Activated CD4-positive, alpha-beta T cell treated with anti-CD3 and anti-CD28 coated beads, Interleukin-2, amount 10 ng/mL, durations not matched to agents 24 days and 14 days (primary cell): ENCODE measurements at regions of chr5 and their contacts with region 1.

Region 1: DNA sequence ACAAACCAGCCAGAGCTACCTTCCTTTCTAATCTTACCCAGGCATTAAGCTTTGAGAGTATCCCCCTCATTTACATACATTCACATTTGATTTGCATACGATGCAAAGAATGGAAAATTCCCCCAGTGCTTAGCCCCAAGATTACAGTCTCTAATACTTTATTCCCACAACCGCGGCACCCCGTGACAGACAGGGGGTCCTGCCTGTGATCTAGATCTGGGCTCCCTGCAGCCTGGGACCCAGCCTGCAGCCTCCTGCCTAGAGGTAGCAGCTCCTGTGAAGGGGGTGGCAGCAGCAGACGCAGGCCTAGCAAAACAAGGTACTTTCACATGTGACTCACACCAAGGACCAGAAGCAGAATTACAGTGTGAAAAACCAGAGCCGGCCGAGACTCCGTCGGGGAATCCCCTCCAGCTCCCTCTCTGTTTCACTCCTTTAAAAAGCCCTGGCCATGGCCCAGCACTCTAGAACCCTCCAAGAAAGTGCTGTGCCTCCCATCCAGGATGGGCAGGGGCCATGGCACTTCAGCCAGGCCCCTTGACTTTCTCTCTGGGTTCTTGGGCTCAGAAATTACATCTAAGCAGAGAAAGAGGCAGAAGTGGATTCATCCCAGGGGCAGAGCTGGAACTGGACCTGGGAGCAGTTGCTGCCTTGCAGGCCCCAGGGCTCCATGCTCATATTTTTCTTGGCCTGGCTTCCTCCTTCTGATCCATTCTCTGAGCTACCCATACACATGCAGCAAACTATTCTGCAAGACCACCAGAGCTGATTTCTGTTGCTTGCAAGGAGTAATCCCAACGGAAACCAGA is 14.0 kb upstream of the TCF7 start:
- DNase-seq: peak; percentile 94
- H3K4me3 Mint-ChIP-seq: peak overlapping the region; percentile 59
- H3K27ac Mint-ChIP-seq: peak overlapping the region; percentile 90
- H3K4me1 Mint-ChIP-seq: peaks cover 58% of the 10 kb centered on the region
- H3K27me3 Mint-ChIP-seq: peaks cover 3% of the 10 kb centered on the region

Region 2: DNA sequence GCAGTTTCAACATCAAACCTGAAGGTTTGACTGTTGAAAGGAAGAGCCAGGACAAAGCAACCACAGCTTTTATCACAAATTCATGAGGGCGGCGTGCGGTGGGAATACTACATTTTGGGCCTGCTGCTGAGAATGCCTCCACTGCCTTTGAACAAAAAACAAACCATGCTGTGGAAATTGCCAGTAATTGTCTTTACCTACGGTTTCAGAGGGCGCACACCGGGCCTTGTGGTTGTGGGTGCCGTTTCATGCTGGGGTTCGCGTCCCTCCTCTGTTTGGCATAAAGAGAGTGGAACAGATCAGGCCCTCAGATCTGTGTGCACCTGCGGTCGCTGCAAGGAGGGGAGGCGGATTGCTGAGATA is 13.6 kb before region 1 on chr5:
- intact Hi-C with region 1: loop called (anchors 1 kb)
- DNase-seq: peak; percentile 94
- H3K4me3 Mint-ChIP-seq: peak overlapping the region; percentile 65
- H3K27ac Mint-ChIP-seq: peak overlapping the region; percentile 95
- H3K4me1 Mint-ChIP-seq: peaks cover 68% of the 10 kb centered on the region
- H3K27me3 Mint-ChIP-seq: peaks cover 4% of the 10 kb centered on the region